Right lobe of liver (tissue), 6 donors: ENCODE measurements at regions of chr10 and their contacts with region 1.

Region 1: GRCh38 chr10:2927958-2928840 is 139.1 kb upstream of the PFKP start:
- DNase-seq: peak in 2 of 3 donors; percentile 51 to 66
- ATAC-seq: peak; percentile 80 to 90 (median 84)
- H3K4me3 ChIP-seq: no peak overlapping the region
- H3K27ac ChIP-seq: no peak overlapping the region
- H3K4me1 ChIP-seq: no peaks in the 10 kb centered on the region
- H3K27me3 ChIP-seq: no peaks in the 10 kb centered on the region
- CTCF ChIP-seq: peak; percentile 63 to 73 (median 67)
- POLR2A ChIP-seq: no peak

Region 2: GRCh38 chr10:3043512-3044368 is 115.5 kb after region 1 on chr10:
- intact Hi-C with region 1: loop called in 1 of 2 experiments (anchors 10 kb)
- DNase-seq: peak in 1 of 3 donors; percentile 48
- ATAC-seq: peak; percentile 70 to 81 (median 76)
- H3K4me3 ChIP-seq: no peak overlapping the region
- H3K27ac ChIP-seq: no peak overlapping the region
- H3K4me1 ChIP-seq: no peaks in the 10 kb centered on the region
- H3K27me3 ChIP-seq: no peaks in the 10 kb centered on the region
- CTCF ChIP-seq: peak; percentile 47 to 63 (median 52)
- POLR2A ChIP-seq: no peak